Transverse colon (tissue), 4 donors: ENCODE measurements at regions of chr11 and their contacts with region 1.

Region 1: DNA sequence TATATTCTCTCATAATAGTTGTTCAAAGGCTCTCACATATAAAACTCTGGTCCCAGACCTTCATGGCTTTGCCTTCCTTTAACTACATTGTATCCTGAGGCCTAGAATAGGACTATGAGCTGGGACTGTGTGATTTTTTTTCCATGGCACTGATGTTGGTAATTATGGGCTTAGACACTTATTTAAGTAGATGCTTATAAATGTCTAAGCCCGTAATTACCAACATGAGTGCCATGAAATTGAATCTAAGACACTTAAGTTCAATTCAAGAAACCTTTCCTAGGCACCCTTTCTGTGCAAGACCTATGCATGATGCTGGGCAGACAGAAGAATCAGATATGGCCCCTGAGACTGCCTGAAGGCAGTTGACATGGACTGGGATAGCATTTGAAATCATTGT is 63.0 kb downstream of the P4HA3 start:
- DNase-seq: no peak
- H3K4me3 ChIP-seq: no peak overlapping the region
- H3K27ac ChIP-seq: no peak overlapping the region
- H3K4me1 ChIP-seq: no peaks in the 10 kb centered on the region
- H3K27me3 ChIP-seq: no peaks in the 10 kb centered on the region
- CTCF ChIP-seq: no peak
- EP300 ChIP-seq: no peak
- POLR2A ChIP-seq: no peak

Region 2: DNA sequence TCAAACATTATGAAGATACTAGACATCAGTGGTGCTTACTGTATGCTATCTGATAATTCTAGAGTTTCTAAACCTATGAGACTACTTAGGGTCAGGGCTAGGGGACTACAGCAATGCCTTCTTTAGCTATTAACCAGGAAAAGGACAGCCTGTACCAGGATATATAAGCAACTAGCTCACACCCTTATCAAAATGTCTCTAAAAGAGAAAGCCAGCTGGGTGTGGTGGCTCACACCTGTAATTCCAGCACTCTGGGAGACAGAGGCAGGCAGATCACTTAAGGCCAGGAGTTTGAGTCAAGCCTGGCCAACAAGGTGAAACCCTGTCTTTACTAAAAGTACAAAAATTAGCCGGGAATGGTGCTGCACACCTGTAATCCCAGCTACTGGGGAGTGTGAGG is 543.4 kb before region 1 on chr11:
- in situ Hi-C with region 1: no loop called
- intact Hi-C with region 1: no loop called
- DNase-seq: peak; percentile 36
- H3K4me3 ChIP-seq: no peak overlapping the region
- H3K27ac ChIP-seq: peak overlapping the region; percentile 40 to 67 (median 58)
- H3K4me1 ChIP-seq: peaks cover 0 to 12% (median 6%) of the 10 kb centered on the region in 4 donors
- H3K27me3 ChIP-seq: no peaks in the 10 kb centered on the region
- CTCF ChIP-seq: no peak
- EP300 ChIP-seq: no peak
- POLR2A ChIP-seq: no peak

Region 3: DNA sequence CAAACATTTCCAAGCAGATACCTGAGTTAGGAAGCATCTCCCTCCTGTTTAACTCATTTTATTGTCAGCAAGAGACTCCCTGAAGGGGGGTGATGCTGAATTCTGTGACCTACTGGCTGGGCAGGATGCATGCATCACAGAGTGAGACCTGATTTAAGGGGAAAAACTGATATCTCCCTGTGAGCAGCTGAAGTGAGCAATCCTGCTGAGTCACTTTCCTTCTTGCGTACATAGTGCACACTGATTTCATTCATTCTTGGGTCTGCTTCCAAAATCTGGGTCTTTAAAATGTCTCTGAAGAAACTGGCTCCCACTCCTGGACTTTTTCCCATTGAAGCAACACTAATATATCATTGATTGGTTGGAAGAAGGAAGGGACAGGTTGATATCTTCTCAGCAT is 39.7 kb after region 1 on chr11:
- in situ Hi-C with region 1: no loop called
- intact Hi-C with region 1: no loop called
- DNase-seq: no peak
- H3K4me3 ChIP-seq: no peak overlapping the region
- H3K27ac ChIP-seq: peak overlapping the region in 2 of 4 donors; percentile 32 to 51
- H3K4me1 ChIP-seq: peaks cover 0 to 16% (median 4%) of the 10 kb centered on the region in 4 donors
- H3K27me3 ChIP-seq: no peaks in the 10 kb centered on the region
- CTCF ChIP-seq: no peak
- EP300 ChIP-seq: no peak
- POLR2A ChIP-seq: no peak

Region 4: GRCh38 chr11:74311352-74311926 is 63.0 kb after region 1 on chr11 and contains the start of gene P4HA3:
- in situ Hi-C with region 1: no loop called
- intact Hi-C with region 1: loop called (anchors 5 kb)
- DNase-seq: peak; percentile 66
- H3K4me3 ChIP-seq: peak within 1 kb of the TSS in 3 of 4 donors; percentile 35 to 56 (median 44)
- H3K27ac ChIP-seq: peak within 1 kb of the TSS in 1 of 4 donors; percentile 9
- H3K4me1 ChIP-seq: peaks cover 5 to 7% (median 6%) of the 10 kb centered on the region in 4 donors
- H3K27me3 ChIP-seq: no peaks in the 10 kb centered on the region
- CTCF ChIP-seq: peak in 1 of 5 experiments; percentile 10
- EP300 ChIP-seq: no peak
- POLR2A ChIP-seq: no peak
- total RNA-seq, gene P4HA3: 0.27 to 0.64 (median 0.40) TPM in 3 of 4 donors, not detected in the other